Aorta (tissue), 5 donors: ENCODE measurements at regions of chr7 and their contacts with region 1.

Region 1: GRCh38 chr7:66628361-66629140 is at the start of gene KCTD7:
- DNase-seq: peak; percentile 99
- ATAC-seq: peak; percentile 98
- H3K4me3 ChIP-seq: peak within 1 kb of the TSS; percentile 61 to 66
- H3K27ac ChIP-seq: peak within 1 kb of the TSS; percentile 43 to 92
- H3K4me1 ChIP-seq: peaks cover 0 to 3% of the 10 kb centered on the region in 2 donors
- H3K27me3 ChIP-seq: no peaks in the 10 kb centered on the region
- total RNA-seq, gene KCTD7: 11.4 to 24.4 TPM

Region 2: GRCh38 chr7:66557608-66558143 is 70.9 kb before region 1 on chr7:
- intact Hi-C with region 1: loop called in 1 of 2 experiments (anchors 5 kb)
- DNase-seq: peak; percentile 79 to 93
- ATAC-seq: peak; percentile 83
- H3K4me3 ChIP-seq: no peak overlapping the region
- H3K27ac ChIP-seq: no peak overlapping the region
- H3K4me1 ChIP-seq: no peaks in the 10 kb centered on the region
- H3K27me3 ChIP-seq: no peaks in the 10 kb centered on the region

Region 3: GRCh38 chr7:66591799-66592596 is 36.6 kb before region 1 on chr7:
- intact Hi-C with region 1: loop called (anchors 1 to 2 kb)
- DNase-seq: peak; percentile 95 to 98
- ATAC-seq: peak; percentile 95
- H3K4me3 ChIP-seq: peak overlapping the region; percentile 72 to 79
- H3K27ac ChIP-seq: peak overlapping the region; percentile 65 to 89
- H3K4me1 ChIP-seq: no peaks in the 10 kb centered on the region
- H3K27me3 ChIP-seq: no peaks in the 10 kb centered on the region

Region 4: GRCh38 chr7:66654123-66654732 is 25.7 kb after region 1 on chr7:
- intact Hi-C with region 1: loop called in 1 of 2 experiments (anchors 1 kb)
- DNase-seq: peak; percentile 99
- ATAC-seq: peak; percentile 99
- H3K4me3 ChIP-seq: peak overlapping the region; percentile 47 to 74
- H3K27ac ChIP-seq: peak overlapping the region; percentile 89 to 95
- H3K4me1 ChIP-seq: no peaks in the 10 kb centered on the region
- H3K27me3 ChIP-seq: no peaks in the 10 kb centered on the region

Region 5: DNA sequence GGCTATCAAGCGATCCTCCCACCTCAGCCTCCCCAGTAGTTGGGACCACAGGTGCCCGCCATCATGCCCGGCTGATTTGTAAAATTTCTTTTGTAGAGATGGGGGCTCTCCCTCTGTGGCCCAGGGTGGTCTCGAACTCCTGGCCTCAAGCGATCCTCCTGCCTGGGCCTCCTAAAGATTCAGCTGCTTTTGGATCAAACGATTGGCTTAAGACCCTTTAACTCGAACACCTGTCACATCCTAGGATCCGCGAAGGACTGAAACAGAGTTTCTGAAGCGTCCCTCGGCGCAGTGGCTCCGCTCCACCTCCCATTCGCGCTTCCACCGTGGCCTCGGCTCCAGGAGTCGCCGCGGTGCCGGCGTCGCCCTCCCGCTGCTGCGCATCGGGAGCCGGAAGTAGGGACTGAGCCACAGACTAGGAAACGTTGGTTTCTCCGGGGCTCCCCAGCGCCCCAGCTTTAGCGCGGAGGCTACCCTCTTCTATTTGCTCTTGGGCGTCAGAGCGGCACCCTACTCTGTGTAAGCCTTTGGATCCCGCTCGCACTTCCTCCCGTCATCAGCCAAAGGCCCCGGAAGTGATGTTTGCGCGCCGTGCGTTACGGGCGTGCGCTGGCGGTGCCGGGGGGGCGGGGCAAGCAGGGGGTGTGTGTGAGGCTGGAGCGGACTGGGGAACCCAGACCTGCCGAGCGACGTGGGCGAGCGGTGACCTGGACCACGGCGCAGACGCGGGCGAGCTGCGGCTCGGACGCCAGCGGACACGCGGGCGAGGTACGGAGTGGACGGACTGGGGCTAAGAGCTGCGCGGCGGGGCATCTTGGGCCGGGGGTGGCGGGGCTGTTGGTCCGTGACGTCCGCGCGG is 53.2 kb after region 1 on chr7:
- intact Hi-C with region 1: loop called in 1 of 2 experiments (anchors 5 kb)
- DNase-seq: peak; percentile 98 to 100
- ATAC-seq: peak; percentile 99
- H3K4me3 ChIP-seq: peak overlapping the region; percentile 70 to 98
- H3K27ac ChIP-seq: peak overlapping the region; percentile 6 to 93
- H3K4me1 ChIP-seq: no peaks in the 10 kb centered on the region
- H3K27me3 ChIP-seq: no peaks in the 10 kb centered on the region